ENCODE measurements at regions of chr14 and their contacts with region 1.

Region 1: GRCh38 chr14:87952307-87953094 is 40.5 kb downstream of the GALC start:
- DNase-seq: no peak
- ATAC-seq: peak; percentile 57
- H3K4me3 Mint-ChIP-seq: peak overlapping the region; percentile 64
- H3K27ac Mint-ChIP-seq: peak overlapping the region; percentile 69
- H3K4me1 Mint-ChIP-seq: peaks cover 24% of the 10 kb centered on the region
- H3K27me3 Mint-ChIP-seq: no peaks in the 10 kb centered on the region
- CTCF ChIP-seq: no peak

Region 2: GRCh38 chr14:87794561-87794960 is 157.9 kb before region 1 on chr14:
- CTCF ChIA-PET with region 1: no interaction called
- POLR2A ChIA-PET with region 1: no interaction called
- intact Hi-C with region 1: no loop called
- DNase-seq: no peak
- ATAC-seq: no peak
- H3K4me3 Mint-ChIP-seq: no peak overlapping the region
- H3K27ac Mint-ChIP-seq: no peak overlapping the region
- H3K4me1 Mint-ChIP-seq: no peaks in the 10 kb centered on the region
- H3K27me3 Mint-ChIP-seq: no peaks in the 10 kb centered on the region
- CTCF ChIP-seq: no peak

Region 3: DNA sequence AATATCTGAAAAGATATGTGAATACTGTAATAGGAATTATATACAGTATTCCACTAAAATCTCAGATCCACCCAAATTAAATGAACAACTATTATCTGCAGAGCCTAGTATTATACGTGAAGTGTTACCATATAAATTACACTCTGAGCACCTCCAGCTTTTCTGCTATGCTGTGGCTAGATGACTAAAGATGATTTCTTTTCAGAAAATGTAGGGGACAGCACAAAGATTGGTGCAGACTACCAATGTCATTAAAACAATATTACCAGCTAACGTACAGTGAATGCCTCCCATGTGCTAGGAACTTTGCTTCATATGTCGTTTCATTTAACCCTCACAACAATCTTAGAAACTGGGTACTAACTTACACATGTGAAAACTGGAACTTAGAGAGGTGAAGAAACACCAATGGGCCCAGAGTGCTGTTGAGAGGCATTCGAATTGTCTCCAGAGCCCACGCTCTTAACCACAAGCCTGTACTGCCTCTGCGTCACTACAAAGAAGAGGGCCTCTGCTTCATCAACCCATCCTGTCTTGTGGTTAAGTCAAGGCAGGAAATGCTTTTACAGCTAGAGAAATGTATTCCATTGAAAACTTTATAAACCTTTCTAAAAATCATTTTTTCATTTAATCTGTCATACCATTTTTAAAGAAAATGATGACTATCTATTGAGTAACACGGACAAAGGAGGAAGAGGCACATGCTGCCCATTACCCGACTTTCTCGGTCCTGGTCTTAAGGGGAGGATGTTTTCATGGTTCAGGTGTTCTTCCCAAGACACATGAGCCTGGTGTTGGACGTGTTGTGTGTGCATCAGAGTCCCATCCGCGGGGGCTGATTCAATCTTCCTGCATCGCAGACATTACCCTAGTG is 53.7 kb after region 1 on chr14:
- CTCF ChIA-PET with region 1: no interaction called
- POLR2A ChIA-PET with region 1: interaction called, 18 read pairs
- intact Hi-C with region 1: loop called (anchors 2 kb)
- DNase-seq: no peak
- ATAC-seq: peak; percentile 79
- H3K4me3 Mint-ChIP-seq: peak overlapping the region; percentile 83
- H3K27ac Mint-ChIP-seq: peak overlapping the region; percentile 84
- H3K4me1 Mint-ChIP-seq: peaks cover 77% of the 10 kb centered on the region
- H3K27me3 Mint-ChIP-seq: no peaks in the 10 kb centered on the region
- CTCF ChIP-seq: no peak

Region 4: DNA sequence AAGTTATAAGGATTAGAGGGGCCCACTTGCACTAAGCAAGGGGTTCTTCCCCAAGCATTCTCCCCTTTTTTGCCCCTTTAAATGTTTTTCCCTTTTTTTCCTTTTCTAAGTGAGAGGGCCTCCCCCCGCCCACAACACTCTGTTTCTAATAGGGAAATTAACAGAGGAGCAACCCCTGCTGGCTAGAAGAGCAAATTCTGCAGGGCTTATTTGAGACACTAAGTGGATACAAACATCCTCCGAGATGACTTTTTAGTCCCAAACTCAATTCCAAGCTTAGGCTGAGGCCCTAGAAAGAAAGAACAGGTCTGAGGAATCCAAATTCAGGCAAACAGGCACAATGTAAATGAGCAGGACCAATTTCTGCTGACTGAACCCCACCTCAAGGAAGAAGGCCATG is 191.3 kb after region 1 on chr14:
- CTCF ChIA-PET with region 1: no interaction called
- POLR2A ChIA-PET with region 1: no interaction called
- intact Hi-C with region 1: no loop called
- DNase-seq: no peak
- ATAC-seq: no peak
- H3K4me3 Mint-ChIP-seq: no peak overlapping the region
- H3K27ac Mint-ChIP-seq: no peak overlapping the region
- H3K4me1 Mint-ChIP-seq: no peaks in the 10 kb centered on the region
- H3K27me3 Mint-ChIP-seq: peaks cover 1% of the 10 kb centered on the region
- CTCF ChIP-seq: no peak

Region 5: DNA sequence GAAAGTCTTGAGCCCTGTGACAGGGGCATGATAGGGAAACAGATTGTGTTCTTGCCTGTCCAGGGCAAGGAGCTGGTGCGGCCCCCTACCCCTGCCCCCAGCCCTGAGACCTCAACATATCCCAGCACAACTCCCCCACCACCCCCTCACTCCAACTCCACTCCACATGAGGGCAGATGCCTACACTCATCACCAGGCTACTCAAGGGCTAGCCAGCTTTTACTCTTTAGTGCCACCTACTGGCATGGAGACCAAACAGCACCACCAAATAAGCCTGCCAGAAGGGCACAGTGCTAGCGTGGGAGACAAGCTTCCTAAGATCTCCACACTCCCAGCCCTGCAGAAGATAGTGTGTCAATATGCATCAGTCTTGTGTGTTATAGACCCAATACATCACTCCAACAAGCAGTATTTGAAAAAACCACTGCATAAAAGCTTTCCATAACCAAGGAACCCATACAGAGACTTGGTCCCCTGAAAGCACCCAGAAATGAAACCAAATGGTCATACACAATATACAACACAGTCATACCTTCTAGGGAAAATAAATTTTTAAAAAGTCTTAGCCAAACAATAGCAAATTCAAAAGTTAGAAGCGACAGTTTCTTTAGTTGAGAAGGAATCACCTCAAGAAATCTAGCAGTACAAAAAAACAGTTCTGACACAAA is 216.1 kb after region 1 on chr14:
- CTCF ChIA-PET with region 1: interaction called, 105 read pairs
- POLR2A ChIA-PET with region 1: interaction called, 3 read pairs
- intact Hi-C with region 1: no loop called
- DNase-seq: no peak
- ATAC-seq: peak; percentile 92
- H3K4me3 Mint-ChIP-seq: no peak overlapping the region
- H3K27ac Mint-ChIP-seq: no peak overlapping the region
- H3K4me1 Mint-ChIP-seq: peaks cover 4% of the 10 kb centered on the region
- H3K27me3 Mint-ChIP-seq: peaks cover 33% of the 10 kb centered on the region
- CTCF ChIP-seq: no peak